ENCODE measurements at regions of chr3 and their contacts with region 1.

Region 1: GRCh38 chr3:178823591-178824246 is 247.9 kb downstream of the ZMAT3 start:
- DNase-seq: peak in 4 of 5 donors; percentile 31 to 58 (median 34)
- H3K4me3 ChIP-seq: no peak overlapping the region
- H3K27ac ChIP-seq: peak overlapping the region; percentile 59 to 68
- H3K4me1 ChIP-seq: peaks cover 5% of the 10 kb centered on the region
- H3K27me3 ChIP-seq: no peaks in the 10 kb centered on the region
- CTCF ChIP-seq: no peak
- EP300 ChIP-seq: no peak
- POLR2A ChIP-seq: no peak

Region 2: DNA sequence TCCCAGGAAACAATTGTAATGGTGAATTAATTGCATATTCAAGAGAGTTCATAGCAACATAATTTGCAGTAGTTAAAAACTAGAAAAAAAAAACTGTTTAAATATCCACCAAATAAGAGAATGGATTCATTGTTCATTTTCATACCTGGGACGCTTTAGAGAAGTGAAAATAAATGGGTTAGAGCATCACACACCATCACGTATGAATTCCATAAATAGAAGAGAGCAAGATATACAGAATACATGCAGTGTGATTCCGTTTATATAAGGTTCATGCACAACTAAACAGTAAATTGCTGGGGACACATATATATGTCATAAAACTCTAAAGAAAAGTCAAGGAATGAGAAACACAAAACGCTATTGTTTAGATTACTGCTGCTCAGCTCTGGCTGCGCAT is 864.5 kb before region 1 on chr3:
- intact Hi-C with region 1: loop called in 1 of 4 experiments (anchors 10 kb)
- DNase-seq: no peak
- H3K4me3 ChIP-seq: no peak overlapping the region
- H3K27ac ChIP-seq: no peak overlapping the region
- H3K4me1 ChIP-seq: no peaks in the 10 kb centered on the region
- H3K27me3 ChIP-seq: no peaks in the 10 kb centered on the region
- CTCF ChIP-seq: no peak
- EP300 ChIP-seq: no peak
- POLR2A ChIP-seq: no peak

Region 3: DNA sequence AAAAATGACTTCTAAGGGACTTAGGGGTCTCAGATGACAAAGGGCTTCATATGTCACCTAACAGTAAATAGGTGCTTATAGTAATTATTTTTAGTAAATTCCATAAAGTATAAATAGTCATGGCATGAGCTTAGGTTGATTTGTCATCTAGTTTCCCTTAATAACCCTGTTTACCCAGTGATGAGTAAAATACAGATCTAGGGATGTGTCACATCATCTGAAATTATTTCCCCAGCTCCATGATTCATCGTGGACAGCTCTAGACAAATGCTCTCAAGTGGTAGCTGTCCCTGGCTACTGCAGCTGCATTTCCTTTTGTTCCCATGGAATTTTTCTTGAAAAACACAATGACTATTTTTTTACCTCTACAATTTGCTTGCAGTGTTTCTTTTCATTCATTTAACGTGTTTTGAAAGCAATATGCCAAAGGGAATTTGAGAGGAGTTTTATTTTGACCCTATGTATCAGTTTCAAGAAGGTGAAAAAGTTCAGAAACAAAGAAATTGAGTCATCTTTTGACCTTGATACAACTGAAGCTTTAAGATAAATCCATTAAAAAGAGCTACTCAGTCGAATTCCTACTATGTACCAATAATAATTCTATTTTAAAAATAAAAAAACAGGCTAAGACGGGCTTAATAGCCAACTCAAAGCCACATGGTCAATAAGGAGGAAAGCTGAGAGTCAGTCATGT is 45.9 kb before region 1 on chr3:
- intact Hi-C with region 1: no loop called
- DNase-seq: no peak
- H3K4me3 ChIP-seq: no peak overlapping the region
- H3K27ac ChIP-seq: no peak overlapping the region
- H3K4me1 ChIP-seq: no peaks in the 10 kb centered on the region
- H3K27me3 ChIP-seq: no peaks in the 10 kb centered on the region
- CTCF ChIP-seq: no peak
- EP300 ChIP-seq: no peak
- POLR2A ChIP-seq: no peak

Region 4: GRCh38 chr3:178803027-178803693 is 20.6 kb before region 1 on chr3:
- intact Hi-C with region 1: loop called in 1 of 4 experiments (anchors 2 kb)
- DNase-seq: no peak
- H3K4me3 ChIP-seq: no peak overlapping the region
- H3K27ac ChIP-seq: no peak overlapping the region
- H3K4me1 ChIP-seq: peaks cover 1% of the 10 kb centered on the region
- H3K27me3 ChIP-seq: no peaks in the 10 kb centered on the region
- CTCF ChIP-seq: no peak
- EP300 ChIP-seq: no peak
- POLR2A ChIP-seq: no peak

Region 5: GRCh38 chr3:178880274-178880673 is 56.6 kb after region 1 on chr3:
- intact Hi-C with region 1: no loop called
- DNase-seq: no peak
- H3K4me3 ChIP-seq: no peak overlapping the region
- H3K27ac ChIP-seq: no peak overlapping the region
- H3K4me1 ChIP-seq: no peaks in the 10 kb centered on the region
- H3K27me3 ChIP-seq: no peaks in the 10 kb centered on the region
- CTCF ChIP-seq: no peak
- EP300 ChIP-seq: no peak
- POLR2A ChIP-seq: no peak

Measured in ovary (tissue), 10 donors.